Endothelial cell of umbilical vein (primary cell): ENCODE measurements at regions of chr14 and their contacts with region 1.

Region 1: GRCh38 chr14:89973234-89973823 is 17.6 kb downstream of the TDP1 start:
- DNase-seq: peak; percentile 67
- H3K4me3 ChIP-seq: no peak overlapping the region
- H3K27ac ChIP-seq: no peak overlapping the region
- H3K4me1 ChIP-seq: no peaks in the 10 kb centered on the region
- H3K27me3 ChIP-seq: no peaks in the 10 kb centered on the region
- CTCF ChIP-seq: peak; percentile 79 to 83
- POLR2A ChIP-seq: no peak

Region 2: GRCh38 chr14:89936658-89937185 is 36.6 kb before region 1 on chr14:
- CTCF ChIA-PET with region 1: interaction called, 68 read pairs
- POLR2A ChIA-PET with region 1: no interaction called
- dilution Hi-C with region 1: no loop called
- intact Hi-C with region 1: loop called (anchors 1 kb)
- DNase-seq: no peak
- H3K4me3 ChIP-seq: no peak overlapping the region
- H3K27ac ChIP-seq: no peak overlapping the region
- H3K4me1 ChIP-seq: peaks cover under 1% of the 10 kb centered on the region
- H3K27me3 ChIP-seq: no peaks in the 10 kb centered on the region
- CTCF ChIP-seq: no peak
- POLR2A ChIP-seq: no peak

Region 3: DNA sequence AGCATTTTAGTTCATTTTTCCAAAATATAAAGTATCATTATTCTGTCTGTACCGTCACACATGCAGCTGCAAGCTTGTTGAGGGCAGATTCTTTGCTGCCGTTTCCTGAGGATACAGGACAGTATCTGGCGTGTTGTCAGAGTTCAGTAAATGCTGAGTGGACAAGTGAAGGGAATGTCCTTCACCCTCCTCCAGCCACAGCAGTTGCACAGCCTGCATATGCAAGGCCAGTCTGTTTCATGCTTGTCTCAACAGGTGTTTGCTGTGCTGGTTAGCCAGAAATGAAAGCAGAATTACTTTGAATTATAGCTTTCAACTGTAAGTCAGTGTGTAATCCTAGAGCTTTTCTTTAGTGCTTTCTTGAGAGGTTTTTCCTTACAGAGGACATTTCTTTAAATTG is 18.9 kb after region 1 on chr14:
- CTCF ChIA-PET with region 1: interaction called, 10 read pairs
- POLR2A ChIA-PET with region 1: no interaction called
- dilution Hi-C with region 1: no loop called
- intact Hi-C with region 1: no loop called
- DNase-seq: no peak
- H3K4me3 ChIP-seq: no peak overlapping the region
- H3K27ac ChIP-seq: no peak overlapping the region
- H3K4me1 ChIP-seq: no peaks in the 10 kb centered on the region
- H3K27me3 ChIP-seq: no peaks in the 10 kb centered on the region
- CTCF ChIP-seq: no peak
- POLR2A ChIP-seq: no peak

Region 4: DNA sequence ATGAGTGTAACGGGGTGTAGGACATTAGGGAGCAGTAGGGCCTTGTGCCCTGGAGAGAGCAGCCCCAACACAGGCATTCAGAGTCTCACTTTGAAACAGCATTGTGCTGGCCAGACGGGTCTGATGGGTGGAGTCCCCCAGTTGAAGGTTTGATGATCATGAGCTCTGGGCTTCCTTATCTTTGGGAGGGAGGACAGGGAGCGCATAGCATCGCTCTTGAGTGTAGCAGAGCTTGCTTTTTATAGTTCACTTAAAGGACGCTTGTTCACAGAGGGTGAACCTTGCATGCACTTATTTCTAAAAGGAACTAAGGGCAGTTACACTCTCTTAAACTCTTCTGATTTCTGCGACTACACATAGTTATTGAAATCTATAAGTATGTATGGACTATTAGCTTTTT is 99.0 kb after region 1 on chr14:
- CTCF ChIA-PET with region 1: interaction called, 10 read pairs
- POLR2A ChIA-PET with region 1: no interaction called
- dilution Hi-C with region 1: no loop called
- intact Hi-C with region 1: no loop called
- DNase-seq: no peak
- H3K4me3 ChIP-seq: no peak overlapping the region
- H3K27ac ChIP-seq: no peak overlapping the region
- H3K4me1 ChIP-seq: no peaks in the 10 kb centered on the region
- H3K27me3 ChIP-seq: peaks cover 3 to 24% of the 10 kb centered on the region in 2 experiments
- CTCF ChIP-seq: no peak
- POLR2A ChIP-seq: no peak